ENCODE measurements at regions of chr1 and their contacts with region 1.

Region 1: DNA sequence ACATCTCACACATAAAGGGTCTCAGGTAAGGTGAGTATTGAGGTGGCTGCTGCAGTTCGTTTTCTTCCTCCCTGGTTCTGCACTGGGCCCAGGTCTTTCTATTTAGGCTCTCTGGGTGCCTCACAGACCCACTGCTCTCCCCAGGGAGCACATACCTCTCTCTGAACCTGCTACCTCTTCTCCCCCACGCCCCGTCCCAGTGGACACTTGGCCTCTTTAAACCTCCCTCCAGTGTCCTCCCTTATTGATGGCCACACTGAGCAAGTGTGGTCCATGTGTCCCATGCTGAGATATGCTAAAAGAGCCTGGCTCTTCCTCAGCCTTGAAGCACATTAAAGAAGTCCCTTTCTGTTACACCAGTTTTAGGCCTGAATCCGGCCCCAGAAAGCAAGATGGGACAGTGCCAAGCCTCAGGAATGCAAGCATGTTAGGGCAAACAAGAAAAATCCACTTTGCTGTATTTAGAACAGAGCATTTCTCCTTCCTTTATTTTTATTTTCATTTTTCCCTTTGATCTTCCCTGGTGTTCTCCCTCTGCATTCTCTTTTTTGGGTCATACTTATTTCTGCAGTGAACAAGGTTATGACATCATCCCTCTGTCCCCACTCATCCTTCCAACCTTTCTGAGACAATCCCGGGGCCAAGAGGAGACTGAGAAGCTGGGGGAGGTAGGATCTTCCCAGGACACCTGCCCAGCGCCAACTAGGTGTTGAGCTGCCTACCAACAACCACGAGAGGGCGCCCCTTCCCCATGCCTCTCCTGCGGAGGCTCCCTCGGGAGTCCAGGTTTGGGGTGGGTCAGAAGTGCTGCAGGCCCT is 5.0 kb upstream of the CHI3L2 start:
- DNase-seq: peak; percentile 86 to 92 (median 91)
- ATAC-seq: peak; percentile 99
- H3K4me3 ChIP-seq: no peak overlapping the region
- H3K27ac ChIP-seq: no peak overlapping the region
- H3K4me1 ChIP-seq: no peaks in the 10 kb centered on the region; a peak in 2 of 5 replicates
- H3K27me3 ChIP-seq: peaks cover 4 to 15% of the 10 kb centered on the region in 2 experiments; a peak in 2 of 5 replicates
- CTCF ChIP-seq: peak; percentile 95 to 97 (median 95)
- EP300 ChIP-seq: no peak
- POLR2A ChIP-seq: no peak
- RAD21 ChIP-seq: peak; percentile 94 to 98

Region 2: GRCh38 chr1:111183308-111184069 is 39.0 kb before region 1 on chr1:
- CTCF ChIA-PET with region 1: no interaction called
- POLR2A ChIA-PET with region 1: no interaction called
- in situ Hi-C with region 1: no loop called
- intact Hi-C with region 1: no loop called
- DNase-seq: no peak
- ATAC-seq: no peak
- H3K4me3 ChIP-seq: no peak overlapping the region
- H3K27ac ChIP-seq: no peak overlapping the region
- H3K4me1 ChIP-seq: no peaks in the 10 kb centered on the region
- H3K27me3 ChIP-seq: no peaks in the 10 kb centered on the region
- CTCF ChIP-seq: no peak
- EP300 ChIP-seq: no peak
- POLR2A ChIP-seq: no peak
- RAD21 ChIP-seq: no peak

Region 3: DNA sequence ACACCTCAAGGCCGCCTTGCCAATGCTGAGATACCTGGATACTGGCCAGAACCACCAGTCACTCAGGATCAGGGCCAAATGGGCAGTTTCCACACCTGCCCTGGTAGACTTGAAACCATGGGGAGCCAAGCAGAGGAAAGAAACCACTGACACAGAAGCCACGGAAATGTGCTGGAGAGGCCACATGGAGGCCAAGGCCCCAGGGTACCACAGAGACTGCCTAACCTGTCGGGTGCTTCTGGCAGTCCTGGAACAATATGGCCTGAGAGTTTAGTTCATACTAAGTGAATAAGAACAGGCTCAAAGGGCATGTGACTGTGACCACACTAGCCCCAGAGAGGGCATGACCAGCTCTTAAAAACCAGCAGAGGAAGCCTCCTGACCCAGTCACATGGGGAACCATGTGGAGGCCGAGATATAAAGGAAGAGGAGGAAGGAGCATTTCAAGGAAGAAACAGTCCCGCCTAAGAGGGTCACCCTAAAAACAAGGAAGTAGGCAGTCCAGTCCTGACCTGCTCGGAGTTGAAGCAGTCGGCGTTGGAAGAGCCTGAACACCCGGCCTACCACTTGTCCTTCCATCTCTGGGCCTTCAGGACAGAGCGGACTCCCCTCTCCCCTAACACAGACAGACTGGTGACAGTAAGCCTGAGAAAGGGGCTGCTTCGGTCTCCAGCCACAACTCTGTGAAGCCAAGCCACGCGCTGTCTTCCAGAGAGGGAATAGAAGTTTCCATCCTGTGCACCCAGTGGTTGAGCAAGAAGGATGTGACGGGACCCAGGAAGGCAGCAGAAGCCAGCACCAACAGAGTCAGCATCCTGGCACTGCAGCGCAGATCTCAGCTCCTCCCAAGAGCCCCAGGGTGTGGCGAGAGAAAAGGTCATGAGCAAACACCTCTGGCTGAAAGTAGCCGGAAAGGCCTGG is 22.4 kb before region 1 on chr1 and contains the start of gene DENND2D:
- CTCF ChIA-PET with region 1: no interaction called
- POLR2A ChIA-PET with region 1: no interaction called
- in situ Hi-C with region 1: no loop called
- intact Hi-C with region 1: no loop called
- DNase-seq: no peak
- ATAC-seq: no peak
- H3K4me3 ChIP-seq: no peak within 1 kb of the TSS
- H3K27ac ChIP-seq: no peak within 1 kb of the TSS
- H3K4me1 ChIP-seq: peaks cover 27% of the 10 kb centered on the region in 2 experiments
- H3K27me3 ChIP-seq: peaks cover 0 to 2% of the 10 kb centered on the region in 2 experiments; a peak in 3 of 5 replicates
- CTCF ChIP-seq: no peak
- EP300 ChIP-seq: no peak
- POLR2A ChIP-seq: no peak
- RAD21 ChIP-seq: no peak
- polyA plus RNA-seq, gene DENND2D: 0.08 TPM in 1 of 2 experiments, not detected in the other

Region 4: DNA sequence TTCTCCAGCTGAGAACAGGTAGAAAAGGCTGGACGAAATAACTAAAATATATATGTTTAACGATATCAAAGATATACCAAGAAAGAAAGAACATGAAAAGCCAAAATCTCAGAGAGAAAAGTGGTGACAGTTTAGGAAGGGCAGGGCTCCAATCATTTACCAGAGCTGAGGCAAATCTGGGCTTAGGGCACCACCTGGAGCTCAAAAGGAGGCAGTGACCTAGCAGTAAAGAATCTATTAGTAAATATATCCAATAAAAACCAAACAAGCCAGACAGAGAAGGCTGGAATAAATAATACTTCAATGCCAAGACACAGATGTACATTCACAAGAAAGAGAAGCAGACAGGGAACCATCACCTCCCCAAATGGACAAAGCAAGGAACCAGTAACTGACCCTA is 111.7 kb after region 1 on chr1:
- CTCF ChIA-PET with region 1: interaction called, 6 read pairs
- POLR2A ChIA-PET with region 1: no interaction called
- in situ Hi-C with region 1: no loop called
- intact Hi-C with region 1: loop called (anchors 1 kb)
- DNase-seq: peak; percentile 22 to 38 (median 26)
- ATAC-seq: peak; percentile 62; the same call in 2 of the 3 replicates
- H3K4me3 ChIP-seq: no peak overlapping the region
- H3K27ac ChIP-seq: no peak overlapping the region
- H3K4me1 ChIP-seq: no peaks in the 10 kb centered on the region
- H3K27me3 ChIP-seq: no peaks in the 10 kb centered on the region
- CTCF ChIP-seq: peak; percentile 50 to 61 (median 51)
- EP300 ChIP-seq: no peak
- POLR2A ChIP-seq: no peak
- RAD21 ChIP-seq: peak; percentile 42 to 78; a peak in 3 of 4 replicates

Region 5: GRCh38 chr1:111399792-111400610 is 177.5 kb after region 1 on chr1:
- CTCF ChIA-PET with region 1: interaction called, 21 read pairs
- POLR2A ChIA-PET with region 1: no interaction called
- in situ Hi-C with region 1: loop called (anchors 10 kb)
- intact Hi-C with region 1: loop called (anchors 1 kb)
- DNase-seq: peak; percentile 41 to 67 (median 50)
- ATAC-seq: peak; percentile 69; the same call in 2 of the 3 replicates
- H3K4me3 ChIP-seq: no peak overlapping the region
- H3K27ac ChIP-seq: no peak overlapping the region
- H3K4me1 ChIP-seq: no peaks in the 10 kb centered on the region
- H3K27me3 ChIP-seq: peaks cover 24 to 31% of the 10 kb centered on the region in 2 experiments
- CTCF ChIP-seq: peak; percentile 60 to 84 (median 62); a peak in 5 of 6 replicates
- EP300 ChIP-seq: no peak
- POLR2A ChIP-seq: no peak
- RAD21 ChIP-seq: peak; percentile 87 to 90

Region 6: GRCh38 chr1:111656086-111657017 is 433.8 kb after region 1 on chr1:
- CTCF ChIA-PET with region 1: interaction called, 4 read pairs
- POLR2A ChIA-PET with region 1: no interaction called
- in situ Hi-C with region 1: no loop called
- intact Hi-C with region 1: loop called (anchors 10 kb)
- DNase-seq: peak; percentile 36 to 69 (median 48)
- ATAC-seq: peak; percentile 38; the same call in 2 of the 3 replicates
- H3K4me3 ChIP-seq: no peak overlapping the region
- H3K27ac ChIP-seq: no peak overlapping the region
- H3K4me1 ChIP-seq: peaks cover 5 to 28% of the 10 kb centered on the region in 2 experiments; a peak in 4 of 5 replicates
- H3K27me3 ChIP-seq: no peaks in the 10 kb centered on the region
- CTCF ChIP-seq: peak; percentile 57 to 87 (median 74); a peak in 5 of 6 replicates
- EP300 ChIP-seq: no peak
- POLR2A ChIP-seq: no peak
- RAD21 ChIP-seq: peak; percentile 92 to 96

Region 7: GRCh38 chr1:112196731-112197130 is 974.2 kb after region 1 on chr1:
- CTCF ChIA-PET with region 1: no interaction called
- POLR2A ChIA-PET with region 1: no interaction called
- in situ Hi-C with region 1: no loop called
- intact Hi-C with region 1: no loop called
- DNase-seq: no peak
- ATAC-seq: no peak
- H3K4me3 ChIP-seq: no peak overlapping the region
- H3K27ac ChIP-seq: no peak overlapping the region
- H3K4me1 ChIP-seq: no peaks in the 10 kb centered on the region
- H3K27me3 ChIP-seq: no peaks in the 10 kb centered on the region
- CTCF ChIP-seq: no peak
- EP300 ChIP-seq: no peak
- POLR2A ChIP-seq: no peak
- RAD21 ChIP-seq: no peak

Measured in K562 (cell line).